Activated CD4-positive, alpha-beta T cell treated with anti-CD3 and anti-CD28 coated beads, Interleukin-2, amount 10 ng/mL, durations not matched to agents 24 days and 14 days (primary cell): ENCODE measurements at regions of chr12 and their contacts with region 1.

Region 1: GRCh38 chr12:99121521-99121920 is 476.4 kb downstream of the APAF1 start:
- DNase-seq: no peak
- H3K4me3 Mint-ChIP-seq: no peak overlapping the region
- H3K27ac Mint-ChIP-seq: no peak overlapping the region
- H3K4me1 Mint-ChIP-seq: no peaks in the 10 kb centered on the region
- H3K27me3 Mint-ChIP-seq: no peaks in the 10 kb centered on the region

Region 2: DNA sequence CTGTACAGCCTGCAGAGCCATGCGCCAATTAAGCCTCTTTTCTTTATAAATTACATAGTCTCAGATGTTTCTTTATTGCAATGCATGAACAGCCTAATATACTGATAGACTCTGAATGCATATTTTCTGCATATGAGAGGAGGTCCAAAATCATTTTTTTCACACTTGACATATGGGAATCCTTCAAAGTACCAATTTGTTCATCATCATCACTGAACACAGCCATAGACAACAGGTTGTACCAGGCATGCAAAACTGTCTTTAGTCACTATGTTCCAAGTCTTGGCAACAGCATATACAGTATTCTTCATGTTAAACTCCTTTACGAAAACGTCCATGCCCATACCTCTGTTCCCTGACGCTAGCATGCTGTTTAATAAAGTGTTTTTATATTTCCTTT is 55.4 kb after region 1 on chr12:
- intact Hi-C with region 1: no loop called
- DNase-seq: no peak
- H3K4me3 Mint-ChIP-seq: no peak overlapping the region
- H3K27ac Mint-ChIP-seq: no peak overlapping the region
- H3K4me1 Mint-ChIP-seq: no peaks in the 10 kb centered on the region
- H3K27me3 Mint-ChIP-seq: no peaks in the 10 kb centered on the region

Region 3: GRCh38 chr12:99783421-99783820 is 661.9 kb after region 1 on chr12:
- intact Hi-C with region 1: loop called (anchors 10 kb)
- DNase-seq: no peak
- H3K4me3 Mint-ChIP-seq: no peak overlapping the region
- H3K27ac Mint-ChIP-seq: no peak overlapping the region
- H3K4me1 Mint-ChIP-seq: no peaks in the 10 kb centered on the region
- H3K27me3 Mint-ChIP-seq: no peaks in the 10 kb centered on the region